ENCODE measurements at regions of chr16 and their contacts with region 1.

Region 1: GRCh38 chr16:48542020-48542473 is 67.9 kb downstream of the N4BP1 start:
- ATAC-seq: peak; percentile 26 to 94 (median 70)
- H3K4me3 ChIP-seq: no peak overlapping the region
- H3K27ac ChIP-seq: no peak overlapping the region
- H3K4me1 ChIP-seq: no peaks in the 10 kb centered on the region

Region 2: DNA sequence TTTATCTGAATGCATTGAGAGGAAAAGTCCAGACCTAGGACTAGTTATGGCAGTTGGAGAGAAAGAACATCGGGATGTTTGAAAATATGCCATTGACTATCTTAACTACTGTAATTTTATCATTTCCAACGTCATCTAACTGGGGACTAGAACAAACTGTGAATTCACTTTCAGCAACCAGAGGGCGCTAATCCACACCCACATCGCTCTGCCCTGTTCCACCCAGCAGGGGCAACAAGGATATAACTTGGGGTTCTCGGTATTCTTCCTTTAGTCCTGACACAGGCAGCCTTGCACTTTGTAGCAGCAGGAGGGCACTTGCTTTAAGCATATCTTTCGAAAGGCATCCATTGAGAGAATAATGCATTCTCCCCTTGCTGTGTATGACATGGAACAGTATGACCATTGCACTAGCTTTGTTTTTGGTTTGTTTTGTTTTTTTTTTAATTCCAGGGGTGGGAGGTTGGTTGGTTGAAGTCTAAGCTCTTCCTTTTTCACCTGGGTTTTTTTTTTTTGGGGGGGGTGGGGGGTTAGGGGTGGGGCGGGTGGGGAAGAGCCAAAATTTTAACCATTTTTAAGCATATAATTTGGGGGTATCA is 188.4 kb before region 1 on chr16:
- in situ Hi-C with region 1: loop called in 1 of 9 experiments (anchors 25 kb)
- ATAC-seq: peak; percentile 65 to 95 (median 84)
- H3K4me3 ChIP-seq: no peak overlapping the region
- H3K27ac ChIP-seq: no peak overlapping the region
- H3K4me1 ChIP-seq: no peaks in the 10 kb centered on the region

Measured in motor neuron (in vitro differentiated cells).